ENCODE measurements at regions of chr11 and their contacts with region 1.

Region 1: GRCh38 chr11:47216121-47216798 is 1.5 kb downstream of the DDB2 start:
- DNase-seq: peak; percentile 70
- ATAC-seq: peak in 1 of 2 donors; percentile 38

Region 2: GRCh38 chr11:47176328-47177228 is 39.7 kb before region 1 on chr11 and contains the start of gene ARFGAP2:
- intact Hi-C with region 1: loop called in 1 of 2 experiments (anchors 5 kb)
- DNase-seq: peak; percentile 97
- ATAC-seq: peak; percentile 95 to 96
- total RNA-seq, gene ARFGAP2: 41.4 to 54.4 TPM

Region 3: DNA sequence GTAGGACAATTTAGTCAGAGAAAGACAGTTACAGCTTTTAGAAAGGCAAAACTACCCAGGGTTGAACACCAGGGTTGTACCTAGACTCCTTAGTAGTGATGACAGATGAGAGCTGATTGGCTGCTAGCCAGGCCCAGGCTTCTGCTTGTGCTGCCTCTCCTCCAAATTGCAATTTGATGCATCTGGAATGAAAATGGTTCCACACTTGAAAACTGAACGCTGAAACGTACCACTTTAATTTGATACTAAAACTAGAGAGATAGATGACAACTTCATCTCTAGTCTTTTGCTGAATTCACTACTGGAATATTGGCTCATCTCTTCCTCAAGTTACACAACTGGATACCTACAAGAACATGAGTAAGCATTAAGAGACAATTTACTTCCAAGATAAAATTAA is 570.1 kb after region 1 on chr11:
- intact Hi-C with region 1: no loop called
- DNase-seq: peak; percentile 69
- ATAC-seq: peak; percentile 87 to 95

Measured in left cardiac atrium (tissue), 4 donors.